CD14-positive monocyte (primary cell): ENCODE measurements at regions of chr20 and their contacts with region 1.

Region 1: DNA sequence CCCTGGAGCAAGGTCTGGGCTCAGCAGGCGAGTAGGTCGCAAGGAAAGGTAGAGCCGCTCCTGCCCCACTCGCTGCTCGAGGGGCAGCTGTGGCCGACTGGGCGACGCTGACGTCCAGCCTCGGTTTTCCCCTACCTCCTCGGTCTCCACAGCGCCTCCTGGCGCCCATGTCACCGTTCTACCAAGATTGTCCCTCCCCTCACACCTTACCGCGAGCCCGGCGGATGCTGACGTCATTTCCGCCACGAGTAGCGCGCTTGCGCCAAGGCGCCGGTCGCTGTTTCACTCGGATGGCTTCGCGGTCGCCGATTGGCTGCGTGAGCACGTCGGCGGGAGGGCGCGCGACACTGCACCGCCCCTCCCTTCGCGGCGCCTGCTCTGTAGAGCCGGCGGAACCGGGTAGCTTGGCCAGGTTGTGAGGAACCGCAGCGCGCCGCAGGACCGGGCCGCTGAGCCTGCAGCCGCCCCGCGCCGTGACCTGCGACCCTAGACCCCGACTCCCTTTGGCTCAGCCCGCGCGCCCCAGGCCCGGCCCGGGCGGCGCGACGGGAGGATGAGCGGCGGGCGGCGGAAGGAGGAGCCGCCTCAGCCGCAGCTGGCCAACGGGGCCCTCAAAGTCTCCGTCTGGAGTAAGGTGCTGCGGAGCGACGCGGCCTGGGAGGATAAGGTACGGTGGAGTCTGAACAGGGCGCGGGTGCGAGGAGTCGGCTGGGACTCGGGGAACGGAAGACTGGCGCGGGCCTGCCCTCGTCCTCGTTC is at the start of gene RAB5IF:
- DNase-seq: peak; percentile 98 to 100 (median 99)
- H3K4me3 ChIP-seq: peak within 1 kb of the TSS; percentile 81 to 100 (median 84)
- H3K4me3 Mint-ChIP-seq: peak within 1 kb of the TSS; percentile 98 to 99
- H3K27ac ChIP-seq: peak within 1 kb of the TSS; percentile 96 to 97
- H3K27ac Mint-ChIP-seq: peak within 1 kb of the TSS; percentile 96 to 99 (median 98)
- H3K4me1 ChIP-seq: peaks cover 40 to 46% of the 10 kb centered on the region in 2 donors
- H3K4me1 Mint-ChIP-seq: peaks cover 35% of the 10 kb centered on the region
- H3K27me3 ChIP-seq: no peaks in the 10 kb centered on the region
- H3K27me3 Mint-ChIP-seq: peaks cover 0 to 4% (median 3%) of the 10 kb centered on the region in 3 donors
- CTCF ChIP-seq: peak; percentile 86
- polyA plus RNA-seq, gene RAB5IF: 325 to 790 (median 757) TPM

Region 2: GRCh38 chr20:36460648-36461599 is 144.7 kb before region 1 on chr20:
- intact Hi-C with region 1: loop called (anchors 2 kb)
- DNase-seq: peak; percentile 85 to 93 (median 89)
- H3K4me3 ChIP-seq: peak overlapping the region; percentile 23 to 95 (median 43)
- H3K4me3 Mint-ChIP-seq: peak overlapping the region; percentile 71 to 77
- H3K27ac ChIP-seq: peak overlapping the region; percentile 88 to 91
- H3K27ac Mint-ChIP-seq: peak overlapping the region; percentile 67 to 89 (median 88)
- H3K4me1 ChIP-seq: peaks cover 36 to 52% of the 10 kb centered on the region in 2 donors
- H3K4me1 Mint-ChIP-seq: peaks cover 47% of the 10 kb centered on the region
- H3K27me3 ChIP-seq: no peaks in the 10 kb centered on the region
- H3K27me3 Mint-ChIP-seq: peaks cover 3 to 11% (median 10%) of the 10 kb centered on the region in 3 donors
- CTCF ChIP-seq: no peak

Region 3: GRCh38 chr20:36550797-36551299 is 54.7 kb before region 1 on chr20:
- intact Hi-C with region 1: loop called (anchors 5 kb)
- DNase-seq: no peak
- H3K4me3 ChIP-seq: no peak overlapping the region
- H3K4me3 Mint-ChIP-seq: no peak overlapping the region
- H3K27ac ChIP-seq: no peak overlapping the region
- H3K27ac Mint-ChIP-seq: peak overlapping the region in 3 of 7 donors; percentile 4 to 78 (median 11)
- H3K4me1 ChIP-seq: no peaks in the 10 kb centered on the region
- H3K4me1 Mint-ChIP-seq: no peaks in the 10 kb centered on the region
- H3K27me3 ChIP-seq: no peaks in the 10 kb centered on the region
- H3K27me3 Mint-ChIP-seq: peaks cover 0 to 3% (median 1%) of the 10 kb centered on the region in 3 donors
- CTCF ChIP-seq: no peak

Region 4: GRCh38 chr20:36573103-36573794 is 32.3 kb before region 1 on chr20 and contains the start of gene TGIF2:
- intact Hi-C with region 1: loop called (anchors 1 to 2 kb)
- DNase-seq: peak; percentile 55 to 84 (median 77)
- H3K4me3 ChIP-seq: peak within 1 kb of the TSS; percentile 82 to 97 (median 91)
- H3K4me3 Mint-ChIP-seq: peak within 1 kb of the TSS; percentile 98 to 100
- H3K27ac ChIP-seq: peak within 1 kb of the TSS; percentile 96 to 97
- H3K27ac Mint-ChIP-seq: peak within 1 kb of the TSS; percentile 89 to 96 (median 93)
- H3K4me1 ChIP-seq: peaks cover 26 to 30% of the 10 kb centered on the region in 2 donors
- H3K4me1 Mint-ChIP-seq: peaks cover 34% of the 10 kb centered on the region
- H3K27me3 ChIP-seq: peaks cover 0 to 3% of the 10 kb centered on the region in 2 donors
- H3K27me3 Mint-ChIP-seq: peaks cover 8 to 12% (median 9%) of the 10 kb centered on the region in 3 donors
- CTCF ChIP-seq: no peak
- polyA plus RNA-seq, gene TGIF2: 11.0 to 15.9 (median 12.2) TPM

Region 5: GRCh38 chr20:36591854-36592641 is 13.5 kb before region 1 on chr20:
- intact Hi-C with region 1: loop called in 1 of 2 experiments (anchors 1 kb)
- DNase-seq: no peak
- H3K4me3 ChIP-seq: no peak overlapping the region
- H3K4me3 Mint-ChIP-seq: no peak overlapping the region
- H3K27ac ChIP-seq: no peak overlapping the region
- H3K27ac Mint-ChIP-seq: peak overlapping the region in 4 of 7 donors; percentile 40 to 63 (median 52)
- H3K4me1 ChIP-seq: peaks cover 66 to 69% of the 10 kb centered on the region in 2 donors
- H3K4me1 Mint-ChIP-seq: peaks cover 70% of the 10 kb centered on the region
- H3K27me3 ChIP-seq: no peaks in the 10 kb centered on the region
- H3K27me3 Mint-ChIP-seq: no peaks in the 10 kb centered on the region
- CTCF ChIP-seq: no peak